Calu3 (cell line): ENCODE measurements at regions of chr4 and their contacts with region 1.

Region 1: DNA sequence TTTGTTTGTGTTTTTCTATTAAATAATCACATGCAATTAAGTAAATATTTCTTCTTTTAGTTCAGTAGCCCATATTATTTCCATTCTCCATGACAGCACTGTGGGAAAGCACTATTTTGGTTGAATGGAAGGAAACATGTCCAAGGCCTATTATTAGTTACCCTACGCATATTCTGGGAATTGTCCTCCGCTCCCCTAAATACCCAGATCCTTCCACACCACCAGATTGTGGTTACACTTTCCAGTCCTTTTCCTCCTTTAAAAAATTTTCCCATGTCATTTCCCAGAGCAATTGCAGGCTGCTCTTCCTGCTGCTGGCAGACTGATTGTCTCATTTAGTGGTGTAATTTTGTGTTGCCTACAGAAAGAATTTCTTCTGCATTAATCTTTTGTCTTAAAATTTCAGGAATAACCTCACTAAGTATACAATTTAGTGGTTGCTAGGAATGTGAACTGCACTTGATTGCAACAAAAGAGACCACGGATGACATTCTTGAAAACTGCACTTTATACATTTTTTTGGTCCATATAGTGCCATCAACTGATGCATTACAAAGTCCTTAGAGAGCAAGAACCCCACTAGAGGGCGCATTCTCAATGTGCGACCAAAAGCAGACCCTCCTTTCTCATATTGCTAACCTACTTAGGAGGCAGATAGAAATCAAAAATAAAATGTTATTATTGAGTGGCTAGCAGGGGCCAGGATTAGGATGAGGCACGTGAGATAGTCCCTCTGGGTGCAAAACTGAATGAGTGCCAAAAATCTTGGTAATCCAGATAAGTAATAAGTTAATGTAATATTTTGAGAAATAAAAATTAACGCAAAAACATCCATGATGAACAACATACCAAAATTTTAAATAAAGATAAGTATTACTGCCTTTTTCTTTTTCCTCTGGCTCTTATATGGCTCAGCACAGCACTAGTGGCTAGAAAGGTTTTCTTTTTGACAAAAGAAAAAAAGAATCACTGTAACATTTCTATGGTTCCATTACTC is 98.8 kb upstream of the IQCM start:
- DNase-seq: peak; percentile 62
- H3K4me3 Mint-ChIP-seq: no peak overlapping the region
- H3K27ac Mint-ChIP-seq: no peak overlapping the region
- H3K4me1 Mint-ChIP-seq: peaks cover 19% of the 10 kb centered on the region
- H3K27me3 Mint-ChIP-seq: no peaks in the 10 kb centered on the region
- CTCF ChIP-seq: peak; percentile 27

Region 2: GRCh38 chr4:149961876-149962597 is 47.6 kb after region 1 on chr4:
- CTCF ChIA-PET with region 1: no interaction called
- intact Hi-C with region 1: loop called (anchors 5 kb)
- DNase-seq: peak; percentile 4
- H3K4me3 Mint-ChIP-seq: no peak overlapping the region
- H3K27ac Mint-ChIP-seq: peak overlapping the region; percentile 35
- H3K4me1 Mint-ChIP-seq: peaks cover 16% of the 10 kb centered on the region
- H3K27me3 Mint-ChIP-seq: no peaks in the 10 kb centered on the region
- CTCF ChIP-seq: no peak

Region 3: DNA sequence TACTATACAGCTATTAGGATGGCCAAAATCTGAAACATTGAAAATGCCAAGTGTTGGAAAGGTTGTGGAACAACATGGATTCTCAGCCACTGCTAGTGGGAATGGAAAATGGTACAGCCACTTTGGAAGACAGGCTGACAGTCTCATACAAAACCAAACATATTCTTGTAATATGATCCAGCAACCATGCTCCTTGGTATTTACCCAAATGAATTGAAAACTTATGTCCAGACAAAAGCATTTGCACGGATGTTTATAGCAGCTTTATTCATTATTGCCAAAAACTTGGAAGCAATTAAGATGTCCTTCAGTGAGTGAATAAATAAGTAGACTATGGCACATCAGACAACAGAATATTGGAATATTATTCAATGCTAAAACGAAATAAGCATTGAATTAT is 58.0 kb after region 1 on chr4:
- CTCF ChIA-PET with region 1: no interaction called
- intact Hi-C with region 1: no loop called
- DNase-seq: no peak
- H3K4me3 Mint-ChIP-seq: no peak overlapping the region
- H3K27ac Mint-ChIP-seq: no peak overlapping the region
- H3K4me1 Mint-ChIP-seq: no peaks in the 10 kb centered on the region
- H3K27me3 Mint-ChIP-seq: no peaks in the 10 kb centered on the region
- CTCF ChIP-seq: no peak